HCT116 (cell line): ENCODE measurements at regions of chr1 and their contacts with region 1.

Region 1: GRCh38 chr1:1291548-1292441 is 11.6 kb downstream of the SCNN1D start:
- DNase-seq: no peak
- ATAC-seq: peak; percentile 75
- H3K4me3 ChIP-seq: no peak overlapping the region
- H3K27ac ChIP-seq: peak overlapping the region; percentile 45; the same call in 1 of the 2 replicates
- H3K4me1 ChIP-seq: peaks cover 14 to 34% of the 10 kb centered on the region in 2 experiments
- H3K27me3 ChIP-seq: no peaks in the 10 kb centered on the region
- CTCF ChIP-seq: peak; percentile 65 to 72 (median 72)
- POLR2A ChIP-seq: no peak
- RAD21 ChIP-seq: peak; percentile 86

Region 2: DNA sequence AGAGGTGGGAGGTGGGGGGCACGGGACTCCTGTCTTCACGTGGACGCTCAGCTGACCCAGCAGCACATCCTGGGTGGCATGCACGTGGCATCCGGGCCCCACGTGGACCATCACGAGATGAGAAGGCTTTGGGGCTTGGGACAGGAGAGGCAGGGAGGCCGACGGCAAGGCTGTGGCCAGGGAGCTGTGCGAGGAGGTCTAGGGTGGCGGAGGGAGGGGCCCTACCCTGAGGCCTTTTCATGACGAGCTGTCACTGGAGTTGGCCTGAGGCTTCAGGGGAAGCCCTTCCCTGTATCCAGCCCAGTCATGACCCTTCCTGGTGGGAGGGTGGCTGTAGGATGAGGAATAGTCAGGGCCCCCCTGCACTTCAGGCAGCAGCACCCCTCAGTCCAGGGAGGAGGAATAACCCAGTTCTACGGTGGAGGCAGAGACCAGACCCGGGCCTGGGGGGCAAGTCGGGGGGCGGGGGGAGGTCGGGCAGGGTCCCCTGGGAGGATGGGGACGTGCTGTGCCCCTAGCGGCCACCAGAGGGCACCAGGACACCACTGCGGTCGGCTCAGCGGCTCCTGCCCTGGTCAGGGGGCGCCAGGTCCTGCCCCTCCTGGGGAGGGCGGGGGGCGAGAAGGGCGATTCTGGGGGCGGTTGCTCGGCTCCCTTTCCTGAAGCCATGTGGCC is 307.9 kb before region 1 on chr1:
- CTCF ChIA-PET with region 1: interaction called, 8 read pairs
- POLR2A ChIA-PET with region 1: no interaction called
- RAD21 ChIA-PET with region 1: no interaction called
- intact Hi-C with region 1: loop called (anchors 2 kb)
- DNase-seq: no peak
- ATAC-seq: peak; percentile 86
- H3K4me3 ChIP-seq: no peak overlapping the region
- H3K27ac ChIP-seq: no peak overlapping the region
- H3K4me1 ChIP-seq: 0 out of 4 replicates have a peak, but pooled peaks cover 0 to 2% of the 10 kb centered on the region in 2 experiments
- H3K27me3 ChIP-seq: no peaks in the 10 kb centered on the region
- CTCF ChIP-seq: peak; percentile 59 to 74 (median 69); a peak in 5 of 6 replicates
- POLR2A ChIP-seq: no peak
- RAD21 ChIP-seq: peak; percentile 86

Region 3: DNA sequence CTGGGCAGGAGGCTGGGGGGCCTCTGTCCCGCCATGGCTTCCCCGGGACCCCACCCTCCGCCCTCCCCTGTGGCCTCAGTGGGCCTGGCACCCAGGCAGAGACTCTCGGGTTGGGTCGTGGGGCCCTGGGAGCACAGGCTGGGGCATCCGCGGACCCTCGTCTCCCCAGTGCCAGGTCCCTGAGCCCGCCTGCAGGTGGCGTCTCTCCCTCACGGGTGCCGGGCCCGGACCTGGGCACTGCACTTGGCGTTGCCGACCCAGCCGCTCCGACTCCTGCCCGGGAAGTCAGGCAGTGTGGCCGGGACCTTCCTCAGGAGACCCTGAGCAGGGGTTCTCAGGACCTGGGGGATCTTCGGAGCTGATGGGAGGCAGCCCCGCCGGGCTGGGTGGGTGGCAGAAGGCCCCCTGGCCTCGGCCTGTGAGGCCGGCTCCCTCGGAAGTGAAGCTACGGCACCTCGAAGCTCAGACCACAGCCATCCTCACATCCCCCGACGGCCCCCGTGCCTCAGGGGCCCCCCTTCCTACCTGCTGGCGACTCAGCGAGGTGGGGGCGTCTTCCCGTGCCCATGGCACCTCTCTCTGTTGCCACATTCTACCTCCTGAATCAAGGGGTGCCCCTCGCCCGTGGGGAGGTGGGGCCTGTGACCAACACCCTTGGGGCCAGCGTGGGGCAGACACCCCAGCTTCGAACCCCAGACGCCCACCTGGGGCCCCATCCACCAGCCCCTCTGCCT is 169.6 kb before region 1 on chr1:
- CTCF ChIA-PET with region 1: interaction called, 30 read pairs
- POLR2A ChIA-PET with region 1: no interaction called
- RAD21 ChIA-PET with region 1: interaction called, 7 read pairs
- intact Hi-C with region 1: loop called (anchors 2 kb)
- DNase-seq: peak; percentile 21
- ATAC-seq: peak; percentile 99
- H3K4me3 ChIP-seq: peak overlapping the region; percentile 15 to 35; a peak in 3 of 4 replicates
- H3K27ac ChIP-seq: peak overlapping the region; percentile 38; the same call in 1 of the 2 replicates
- H3K4me1 ChIP-seq: peaks cover 2 to 10% of the 10 kb centered on the region in 2 experiments; a peak in 3 of 4 replicates
- H3K27me3 ChIP-seq: no peaks in the 10 kb centered on the region
- CTCF ChIP-seq: peak; percentile 82 to 91 (median 88)
- POLR2A ChIP-seq: no peak
- RAD21 ChIP-seq: peak; percentile 100

Region 4: GRCh38 chr1:1307908-1308755 is 16.3 kb after region 1 on chr1 and contains the starts of genes ACAP3 and PUSL1:
- CTCF ChIA-PET with region 1: interaction called, 16 read pairs
- POLR2A ChIA-PET with region 1: no interaction called
- RAD21 ChIA-PET with region 1: interaction called in 1 of 2 experiments, 3 read pairs
- intact Hi-C with region 1: no loop called
- DNase-seq: peak; percentile 83
- ATAC-seq: peak; percentile 53
- H3K4me3 ChIP-seq: peak within 1 kb of the TSS; percentile 60 to 86
- H3K27ac ChIP-seq: peak within 1 kb of the TSS; percentile 99
- H3K4me1 ChIP-seq: peaks cover 36 to 55% of the 10 kb centered on the region in 2 experiments
- H3K27me3 ChIP-seq: no peaks in the 10 kb centered on the region
- CTCF ChIP-seq: no peak
- POLR2A ChIP-seq: no peak
- RAD21 ChIP-seq: no peak
- total RNA-seq, gene ACAP3: 38.8 TPM
- total RNA-seq, gene PUSL1: 47.2 TPM

Region 5: GRCh38 chr1:1763657-1764616 is 472.1 kb after region 1 on chr1:
- CTCF ChIA-PET with region 1: no interaction called
- POLR2A ChIA-PET with region 1: no interaction called
- RAD21 ChIA-PET with region 1: no interaction called
- intact Hi-C with region 1: no loop called
- DNase-seq: no peak
- ATAC-seq: peak; percentile 30; the same call in 1 of the 2 replicates
- H3K4me3 ChIP-seq: no peak overlapping the region
- H3K27ac ChIP-seq: no peak overlapping the region
- H3K4me1 ChIP-seq: peaks cover 8 to 14% of the 10 kb centered on the region in 2 experiments
- H3K27me3 ChIP-seq: no peaks in the 10 kb centered on the region
- CTCF ChIP-seq: no peak
- POLR2A ChIP-seq: no peak
- RAD21 ChIP-seq: no peak